MCF 10A (cell line): ENCODE measurements at regions of chr5 and their contacts with region 1.

Region 1: DNA sequence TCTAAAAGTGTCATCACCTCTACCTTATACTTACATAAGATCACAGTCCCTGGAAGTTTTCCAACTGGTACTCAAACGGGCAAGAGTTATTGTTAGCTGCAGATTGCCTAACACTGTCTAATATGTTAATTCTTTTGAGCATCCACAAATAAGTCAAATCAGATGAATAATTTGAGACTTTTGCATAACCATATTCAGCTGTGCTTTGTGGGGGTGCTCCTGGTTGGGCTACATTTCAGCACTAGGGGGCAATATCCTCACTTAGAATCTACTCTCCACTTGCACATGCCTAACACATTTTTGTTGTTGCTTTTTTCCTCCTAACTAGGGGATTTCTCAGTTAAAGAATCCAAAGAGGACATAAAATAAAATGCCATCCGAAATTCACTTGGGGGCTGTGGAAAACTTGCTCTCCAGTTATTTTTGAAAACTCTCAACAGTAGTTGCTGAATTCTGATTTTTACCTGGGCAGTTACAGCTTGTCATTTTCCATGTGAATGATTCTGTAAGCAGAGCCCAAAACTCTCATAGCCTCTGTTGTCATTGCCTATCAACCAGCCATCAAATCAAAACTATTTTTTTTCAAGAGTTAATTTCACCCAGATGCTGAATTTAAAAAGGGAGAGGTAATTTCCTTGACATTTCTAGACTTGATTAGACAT is 71.5 kb downstream of the TRIM36 start:
- DNase-seq: peak; percentile 62
- H3K4me3 Mint-ChIP-seq: no peak overlapping the region
- H3K27ac Mint-ChIP-seq: no peak overlapping the region
- H3K4me1 Mint-ChIP-seq: no peaks in the 10 kb centered on the region
- H3K27me3 Mint-ChIP-seq: no peaks in the 10 kb centered on the region
- CTCF ChIP-seq: peak; percentile 66

Region 2: DNA sequence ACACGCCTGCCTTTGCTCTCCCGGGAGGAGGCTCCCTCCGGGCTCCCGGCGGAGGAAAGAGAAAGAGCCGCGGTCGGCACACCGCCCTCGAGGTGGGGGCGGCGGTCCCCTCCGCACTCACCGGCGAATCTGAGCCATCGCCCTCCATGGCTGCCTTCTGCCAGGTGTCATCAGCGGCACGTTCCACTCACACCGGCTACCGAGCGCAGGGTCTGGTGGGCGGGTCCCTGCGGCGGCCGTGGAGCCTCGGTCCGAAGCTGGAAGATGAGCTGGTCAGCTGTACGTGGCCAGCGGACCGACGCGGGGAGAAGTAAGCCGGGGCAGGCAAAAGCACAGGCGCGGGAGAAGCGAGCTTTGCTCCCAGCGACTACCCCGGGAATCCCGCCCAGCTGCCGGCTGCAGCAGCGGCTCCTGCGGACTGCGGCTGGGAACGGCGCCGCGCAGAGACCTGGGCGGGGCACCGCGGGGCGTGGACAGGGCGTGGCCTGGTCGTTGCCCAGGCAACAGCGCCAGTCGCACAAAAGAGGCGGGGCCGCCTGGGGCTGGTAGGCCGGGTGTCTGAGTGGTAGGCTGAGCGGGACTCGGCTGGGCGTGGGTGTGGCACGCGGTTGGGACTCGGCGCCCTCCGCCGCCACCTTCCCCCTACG is 71.4 kb after region 1 on chr5 and contains the start of gene TRIM36:
- CTCF ChIA-PET with region 1: interaction called, 6 read pairs
- POLR2A ChIA-PET with region 1: interaction called, 3 read pairs
- intact Hi-C with region 1: loop called (anchors 2 kb)
- DNase-seq: peak; percentile 94
- H3K4me3 Mint-ChIP-seq: peak within 1 kb of the TSS; percentile 84
- H3K27ac Mint-ChIP-seq: peak within 1 kb of the TSS; percentile 35
- H3K4me1 Mint-ChIP-seq: peaks cover 6% of the 10 kb centered on the region
- H3K27me3 Mint-ChIP-seq: no peaks in the 10 kb centered on the region
- CTCF ChIP-seq: peak; percentile 8
- total RNA-seq, gene TRIM36: 4.9 and 7.1 TPM in 2 replicates